ENCODE measurements at regions of chr18 and their contacts with region 1.

Region 1: GRCh38 chr18:11518788-11519685 is 90.4 kb upstream of the SLC35G4 start:
- DNase-seq: no peak
- ATAC-seq: no peak

Region 2: DNA sequence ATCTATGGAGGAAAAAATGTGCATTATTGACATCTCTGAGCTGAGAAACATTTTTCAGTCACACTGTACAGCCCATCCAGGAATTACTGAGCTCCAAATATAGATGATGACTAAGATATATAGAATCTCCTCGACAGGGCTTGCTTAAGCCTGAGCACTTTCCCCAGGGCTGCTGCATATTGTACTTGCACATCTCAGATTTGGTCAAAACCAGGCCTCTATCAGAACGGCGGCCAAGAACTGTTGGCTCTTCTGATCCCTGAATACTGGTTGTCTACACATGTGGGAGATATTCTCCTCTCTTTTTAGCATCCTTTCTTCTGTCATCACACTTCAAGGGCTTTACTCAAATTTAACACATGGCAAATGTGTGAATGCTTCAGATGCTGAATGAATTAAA is 111.1 kb before region 1 on chr18:
- intact Hi-C with region 1: loop called (anchors 10 kb)
- DNase-seq: no peak
- ATAC-seq: no peak

Region 3: GRCh38 chr18:11561293-11561692 is 42.3 kb after region 1 on chr18:
- intact Hi-C with region 1: no loop called
- DNase-seq: no peak
- ATAC-seq: no peak

Measured in Right ventricle myocardium inferior (tissue), 1 donor.